Spleen (tissue), 13 donors: ENCODE measurements at regions of chr1 and their contacts with region 1.

Region 1: GRCh38 chr1:85313888-85314696 is 37.7 kb upstream of the BCL10 start:
- DNase-seq: no peak
- H3K4me3 ChIP-seq: no peak overlapping the region
- H3K27ac ChIP-seq: peak overlapping the region in 7 of 8 donors; percentile 8 to 70 (median 37)
- H3K4me1 ChIP-seq: peaks cover 0 to 26% (median 5%) of the 10 kb centered on the region in 6 donors
- H3K27me3 ChIP-seq: no peaks in the 10 kb centered on the region
- CTCF ChIP-seq: no peak
- POLR2A ChIP-seq: no peak

Region 2: DNA sequence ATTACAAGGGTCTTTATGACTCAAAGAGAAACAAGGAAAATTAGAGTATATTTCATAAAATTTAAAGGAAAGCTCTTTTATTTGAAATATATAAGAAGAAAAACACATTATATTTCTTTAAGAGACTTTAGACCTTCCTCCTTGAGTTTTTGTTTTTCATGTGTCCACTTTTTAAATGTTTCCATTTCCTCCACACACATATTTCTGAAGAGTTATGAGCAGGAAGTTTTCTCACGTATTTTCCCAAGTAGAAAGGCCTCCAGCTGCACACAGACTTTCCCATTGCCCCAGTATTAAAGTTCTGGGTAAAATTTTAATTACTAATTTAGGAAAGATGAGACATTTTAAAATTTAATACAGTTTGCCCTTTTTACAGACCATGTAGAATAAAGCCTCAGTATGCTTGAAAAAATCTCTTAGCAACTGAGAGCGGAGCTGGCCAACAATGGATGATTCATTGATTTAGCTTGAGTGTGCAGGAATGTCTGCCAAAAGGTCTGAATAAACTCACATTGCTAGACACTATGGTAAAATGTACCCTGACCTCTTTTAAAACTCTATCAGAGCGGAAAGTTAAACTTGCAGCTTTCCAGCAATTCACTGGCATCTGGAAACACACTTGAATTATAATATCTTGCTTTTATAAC is 92.9 kb after region 1 on chr1:
- intact Hi-C with region 1: no loop called
- DNase-seq: no peak
- H3K4me3 ChIP-seq: no peak overlapping the region
- H3K27ac ChIP-seq: peak overlapping the region; percentile 1 to 56 (median 22)
- H3K4me1 ChIP-seq: peaks cover 0 to 16% (median 0%) of the 10 kb centered on the region in 6 donors
- H3K27me3 ChIP-seq: no peaks in the 10 kb centered on the region
- CTCF ChIP-seq: no peak
- POLR2A ChIP-seq: no peak

Region 3: GRCh38 chr1:85448358-85448757 is 134.3 kb after region 1 on chr1:
- intact Hi-C with region 1: no loop called
- DNase-seq: no peak
- H3K4me3 ChIP-seq: no peak overlapping the region
- H3K27ac ChIP-seq: peak overlapping the region in 7 of 8 donors; percentile 2 to 75 (median 67)
- H3K4me1 ChIP-seq: peaks cover 0 to 14% (median 0%) of the 10 kb centered on the region in 6 donors
- H3K27me3 ChIP-seq: no peaks in the 10 kb centered on the region
- CTCF ChIP-seq: no peak
- POLR2A ChIP-seq: no peak

Region 4: GRCh38 chr1:85502625-85503083 is 188.6 kb after region 1 on chr1:
- intact Hi-C with region 1: loop called (anchors 5 kb)
- DNase-seq: no peak
- H3K4me3 ChIP-seq: no peak overlapping the region
- H3K27ac ChIP-seq: no peak overlapping the region
- H3K4me1 ChIP-seq: no peaks in the 10 kb centered on the region
- H3K27me3 ChIP-seq: no peaks in the 10 kb centered on the region
- CTCF ChIP-seq: peak in 7 of 11 experiments; percentile 18 to 50 (median 41)
- POLR2A ChIP-seq: no peak

Region 5: GRCh38 chr1:85580872-85581801 is 267.0 kb after region 1 on chr1:
- intact Hi-C with region 1: loop called (anchors 5 kb)
- DNase-seq: peak; percentile 85
- H3K4me3 ChIP-seq: peak overlapping the region; percentile 39 to 70 (median 46)
- H3K27ac ChIP-seq: peak overlapping the region; percentile 62 to 89 (median 82)
- H3K4me1 ChIP-seq: peaks cover 0 to 56% (median 38%) of the 10 kb centered on the region in 6 donors
- H3K27me3 ChIP-seq: peaks cover 2 to 72% (median 23%) of the 10 kb centered on the region in 7 donors
- CTCF ChIP-seq: peak in 10 of 11 experiments; percentile 16 to 70 (median 49)
- POLR2A ChIP-seq: no peak

Region 6: DNA sequence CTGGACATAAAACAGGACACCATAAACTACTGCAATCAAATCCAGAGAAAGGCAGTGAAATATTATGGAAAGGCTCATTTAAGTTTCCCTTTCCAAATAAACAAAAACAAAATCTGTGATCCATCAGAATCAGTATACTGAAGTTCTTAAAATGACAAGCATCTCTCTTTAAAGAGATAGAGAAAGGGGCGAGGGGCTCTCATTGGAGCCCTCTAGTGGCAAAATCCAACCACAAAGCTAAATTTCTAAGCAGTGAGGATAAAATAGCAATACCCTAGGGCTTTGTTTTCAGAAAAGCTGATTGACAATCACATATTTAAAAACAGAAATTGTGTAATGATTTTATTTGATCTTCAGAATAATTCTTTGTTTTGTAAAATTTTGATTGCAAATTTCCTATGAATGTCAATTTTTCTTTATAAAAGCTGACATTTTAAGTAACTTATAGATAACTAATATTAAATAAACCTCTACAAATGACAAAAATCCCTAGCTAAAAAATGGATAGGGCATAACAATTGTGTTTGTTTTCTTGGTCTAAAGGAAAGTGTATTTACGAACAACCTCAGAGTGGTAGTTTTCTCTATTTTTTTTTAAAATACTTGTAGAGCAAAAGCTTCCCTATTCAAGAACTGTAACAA is 704.3 kb after region 1 on chr1:
- intact Hi-C with region 1: loop called (anchors 10 kb)
- DNase-seq: no peak
- H3K4me3 ChIP-seq: no peak overlapping the region
- H3K27ac ChIP-seq: no peak overlapping the region
- H3K4me1 ChIP-seq: no peaks in the 10 kb centered on the region
- H3K27me3 ChIP-seq: no peaks in the 10 kb centered on the region
- CTCF ChIP-seq: peak in 9 of 11 experiments; percentile 16 to 66 (median 58)
- POLR2A ChIP-seq: no peak